A673 (cell line): ENCODE measurements at regions of chr17 and their contacts with region 1.

Region 1: DNA sequence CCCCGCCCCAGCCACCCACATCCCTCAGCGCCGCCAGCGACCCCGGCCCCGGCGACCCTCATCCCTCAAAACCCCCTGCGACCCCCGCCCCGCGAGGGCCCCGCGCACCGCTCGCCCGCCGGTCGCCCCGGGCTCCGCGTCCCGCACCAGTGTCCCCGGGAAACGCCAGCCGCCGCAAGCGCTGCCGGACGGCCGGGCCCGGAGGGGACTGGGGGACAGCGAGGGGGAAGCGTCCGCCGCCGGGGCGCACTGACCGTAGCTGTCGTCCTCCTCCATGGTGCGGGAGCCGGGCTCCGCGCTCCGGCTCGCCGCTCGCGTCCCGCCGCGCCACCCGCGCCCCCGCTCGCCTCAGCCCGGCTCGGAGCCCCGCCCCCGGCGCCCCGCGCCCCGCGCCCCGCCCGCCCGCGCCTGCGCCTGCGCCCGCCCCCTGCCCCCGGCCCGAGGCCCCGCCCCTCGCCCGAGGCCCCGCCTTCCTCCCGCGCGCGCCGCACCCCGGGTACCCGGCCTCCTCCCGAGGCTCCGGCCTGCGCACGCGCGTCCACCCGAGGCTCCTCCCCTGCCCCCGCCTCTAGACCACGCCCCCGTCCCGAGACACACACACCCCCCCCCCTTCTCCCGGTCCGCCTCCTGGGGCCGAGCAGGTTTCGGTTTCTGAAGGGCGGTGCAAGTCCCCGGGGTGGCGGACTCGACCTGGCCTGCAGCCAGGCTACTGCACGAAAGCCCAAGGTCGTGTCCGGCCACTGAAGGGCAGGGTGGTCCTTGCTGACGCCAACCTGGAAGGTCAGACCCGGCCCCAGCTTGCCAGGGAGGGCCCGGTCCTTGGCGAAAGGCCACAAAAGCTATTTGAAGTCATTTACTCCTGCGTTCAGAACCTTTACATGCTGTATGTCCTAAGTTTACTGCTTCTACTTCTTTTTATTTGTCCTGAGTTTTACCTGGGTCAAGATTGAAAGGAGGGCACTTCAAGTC is at the start of gene CYTH1:
- DNase-seq: peak; percentile 92
- H3K4me3 ChIP-seq: peak within 1 kb of the TSS; percentile 98
- H3K27ac ChIP-seq: peak within 1 kb of the TSS; percentile 83
- H3K4me1 ChIP-seq: peaks cover 4% of the 10 kb centered on the region
- H3K27me3 ChIP-seq: no peaks in the 10 kb centered on the region
- CTCF ChIP-seq: no peak
- total RNA-seq, gene CYTH1: 17.9 and 24.6 TPM in 2 replicates

Region 2: GRCh38 chr17:78748730-78749317 is 33.4 kb before region 1 on chr17:
- CTCF ChIA-PET with region 1: no interaction called
- POLR2A ChIA-PET with region 1: no interaction called
- intact Hi-C with region 1: no loop called
- DNase-seq: no peak
- H3K4me3 ChIP-seq: no peak overlapping the region
- H3K27ac ChIP-seq: no peak overlapping the region
- H3K4me1 ChIP-seq: peaks cover 4% of the 10 kb centered on the region
- H3K27me3 ChIP-seq: no peaks in the 10 kb centered on the region
- CTCF ChIP-seq: no peak

Region 3: DNA sequence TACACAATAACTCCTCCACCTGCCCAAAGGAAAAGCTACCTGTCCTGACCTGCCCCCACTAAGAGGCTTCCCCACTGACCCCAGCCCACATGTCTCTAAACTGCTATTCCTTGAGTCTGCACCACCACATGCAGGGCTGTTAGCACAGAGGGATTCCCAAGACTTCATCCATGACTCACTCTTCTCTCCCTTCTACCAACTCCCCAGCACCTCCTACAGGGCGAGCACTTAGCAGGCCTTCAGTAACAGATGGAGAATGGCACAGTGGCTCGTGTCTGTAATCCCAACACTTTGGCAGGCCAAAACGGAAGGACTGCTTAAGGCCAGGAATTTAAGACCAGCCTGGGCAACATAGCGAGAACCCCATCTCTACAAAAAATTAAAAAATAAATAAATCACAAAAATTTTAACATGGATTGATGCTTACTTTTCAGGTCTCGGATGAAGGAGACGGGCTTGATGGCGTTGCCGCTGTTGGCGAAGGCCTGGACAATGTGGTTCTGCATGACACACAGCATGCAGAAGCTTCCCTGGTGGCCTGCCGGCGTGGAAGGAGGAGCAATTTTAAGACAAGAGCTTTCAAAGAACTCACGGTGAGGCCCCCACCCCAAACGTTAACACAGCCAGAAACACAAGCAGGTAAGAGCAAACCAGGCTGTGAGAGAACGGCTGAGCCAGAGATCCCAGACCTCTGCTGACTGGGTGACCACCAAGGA is 46.4 kb after region 1 on chr17:
- CTCF ChIA-PET with region 1: no interaction called
- POLR2A ChIA-PET with region 1: interaction called, 16 read pairs
- intact Hi-C with region 1: no loop called
- DNase-seq: peak; percentile 56
- H3K4me3 ChIP-seq: no peak overlapping the region
- H3K27ac ChIP-seq: no peak overlapping the region
- H3K4me1 ChIP-seq: no peaks in the 10 kb centered on the region
- H3K27me3 ChIP-seq: no peaks in the 10 kb centered on the region
- CTCF ChIP-seq: peak; percentile 41

Region 4: DNA sequence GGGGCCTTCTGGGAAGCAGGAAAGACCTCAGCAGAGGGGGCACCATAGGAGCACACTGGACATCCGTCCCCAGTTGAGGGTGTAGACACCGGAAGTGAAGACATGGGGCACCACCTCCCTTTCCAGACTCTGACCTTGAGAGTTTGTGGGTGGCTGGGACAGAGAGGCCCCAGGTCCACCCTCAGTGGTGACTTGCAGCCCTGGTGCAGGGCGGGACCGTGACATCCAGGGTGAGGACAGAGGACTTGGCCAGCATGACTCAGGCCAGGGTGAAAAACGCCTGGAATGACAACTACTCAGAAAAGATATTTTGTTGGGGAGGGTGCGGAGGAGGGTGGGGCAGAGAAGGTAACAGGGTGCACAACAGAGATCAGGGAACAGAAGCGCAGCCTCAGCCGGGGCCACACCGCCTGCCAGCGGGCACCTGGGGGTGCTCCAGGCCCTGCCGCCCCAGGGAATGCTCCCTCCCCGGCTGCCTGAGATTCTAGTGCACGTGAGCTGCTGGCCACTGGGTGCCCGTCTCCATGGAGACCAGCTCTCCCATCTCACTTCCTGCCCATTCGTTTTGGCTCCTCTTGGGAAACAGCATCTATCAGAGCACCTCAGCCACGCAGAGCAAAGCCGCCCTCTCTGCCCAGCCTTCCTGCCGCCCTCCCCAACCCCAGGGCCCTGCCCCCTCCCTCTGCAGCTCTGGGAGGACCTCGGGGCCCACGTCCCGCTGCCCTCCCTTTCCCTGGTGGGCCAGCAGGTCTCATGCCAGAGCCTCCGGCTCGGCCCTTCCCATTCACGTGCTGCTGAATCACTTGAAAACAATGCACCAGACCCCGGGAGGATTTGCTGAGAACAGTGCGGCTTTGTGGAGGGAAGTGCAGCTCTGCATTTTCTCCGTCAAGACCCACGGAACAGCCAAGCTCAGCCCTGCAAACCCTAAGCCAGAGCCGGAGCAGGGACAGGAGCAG is 101.2 kb after region 1 on chr17:
- CTCF ChIA-PET with region 1: no interaction called
- POLR2A ChIA-PET with region 1: no interaction called
- intact Hi-C with region 1: no loop called
- DNase-seq: peak; percentile 40
- H3K4me3 ChIP-seq: no peak overlapping the region
- H3K27ac ChIP-seq: no peak overlapping the region
- H3K4me1 ChIP-seq: peaks cover 5% of the 10 kb centered on the region
- H3K27me3 ChIP-seq: no peaks in the 10 kb centered on the region
- CTCF ChIP-seq: no peak